OCI-LY7 (cell line): ENCODE measurements at regions of chr2 and their contacts with region 1.

Region 1: GRCh38 chr2:48322251-48322650 is 207.7 kb upstream of the STON1 start:
- DNase-seq: no peak
- H3K4me3 ChIP-seq: no peak overlapping the region
- H3K27ac ChIP-seq: no peak overlapping the region
- H3K4me1 ChIP-seq: peaks cover 60% of the 10 kb centered on the region
- CTCF ChIP-seq: no peak

Region 2: DNA sequence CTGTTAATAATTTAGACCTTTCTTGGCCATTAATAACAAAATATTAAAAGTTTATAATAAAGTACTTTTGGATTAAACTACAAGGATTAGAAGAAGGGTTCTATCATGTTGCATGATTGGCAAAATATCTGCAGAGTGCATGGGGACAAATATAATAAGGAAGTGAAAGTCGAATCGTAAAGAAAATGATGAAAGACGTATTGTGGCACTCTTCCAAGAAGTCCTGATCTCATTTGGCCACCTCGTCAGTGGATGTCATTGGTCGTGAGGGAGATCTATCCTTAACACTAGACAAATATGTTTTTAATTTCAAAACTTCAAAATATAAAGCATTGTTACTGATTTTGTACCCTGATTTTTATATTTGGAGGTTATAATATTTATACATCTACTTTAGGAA is 10.0 kb after region 1 on chr2:
- CTCF ChIA-PET with region 1: no interaction called
- POLR2A ChIA-PET with region 1: interaction called, 15 read pairs
- intact Hi-C with region 1: no loop called
- DNase-seq: peak; percentile 56
- H3K4me3 ChIP-seq: no peak overlapping the region
- H3K27ac ChIP-seq: no peak overlapping the region
- H3K4me1 ChIP-seq: peaks cover 39% of the 10 kb centered on the region
- CTCF ChIP-seq: no peak

Region 3: DNA sequence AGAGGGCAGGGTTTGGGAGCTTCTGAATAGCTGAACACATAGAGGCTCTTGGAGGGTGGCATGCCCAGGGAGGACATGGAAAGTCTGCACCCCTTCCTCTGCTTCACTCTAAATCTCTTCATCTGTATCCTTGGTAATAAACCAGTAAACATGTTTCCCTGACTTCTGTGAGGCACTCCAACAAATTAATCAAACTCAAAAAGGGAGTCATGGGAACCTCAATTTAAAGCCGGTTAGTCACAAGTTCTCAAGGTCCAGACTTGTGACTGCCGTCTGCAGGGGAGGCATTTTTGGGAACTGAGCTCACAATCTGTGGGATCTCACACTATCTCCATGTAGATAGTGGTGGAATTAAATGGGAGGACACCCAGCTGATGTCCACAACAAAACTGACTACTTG is 174.6 kb after region 1 on chr2:
- CTCF ChIA-PET with region 1: no interaction called
- POLR2A ChIA-PET with region 1: no interaction called
- intact Hi-C with region 1: no loop called
- DNase-seq: no peak
- H3K4me3 ChIP-seq: no peak overlapping the region
- H3K27ac ChIP-seq: no peak overlapping the region
- H3K4me1 ChIP-seq: no peaks in the 10 kb centered on the region
- CTCF ChIP-seq: no peak